ENCODE measurements at regions of chr9 and their contacts with region 1.

Region 1: GRCh38 chr9:125126019-125126746 is 17.1 kb downstream of the SCAI start:
- DNase-seq: peak; percentile 68
- CTCF ChIP-seq: no peak

Region 2: DNA sequence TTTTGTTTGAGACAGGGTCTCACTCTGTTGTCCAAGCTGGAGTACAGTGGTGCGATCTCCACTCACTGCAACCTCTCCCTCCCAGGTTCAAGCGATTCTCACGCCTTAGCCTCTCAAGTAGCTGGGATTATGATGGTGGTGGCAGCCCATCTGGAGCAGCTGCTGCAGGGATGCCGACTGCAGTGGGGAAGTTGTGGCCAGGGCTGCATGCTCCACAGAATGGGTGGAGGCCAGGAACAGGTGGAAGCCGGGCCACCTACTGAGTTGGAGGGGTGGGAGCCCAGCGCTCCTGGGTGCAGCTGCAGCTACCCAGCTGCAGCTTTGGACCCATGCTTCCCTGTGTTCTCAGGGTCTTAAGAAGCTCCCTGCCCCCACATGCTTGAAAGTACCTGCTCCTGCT is 82.6 kb before region 1 on chr9:
- CTCF ChIA-PET with region 1: no interaction called
- POLR2A ChIA-PET with region 1: no interaction called
- DNase-seq: no peak
- CTCF ChIP-seq: no peak

Region 3: DNA sequence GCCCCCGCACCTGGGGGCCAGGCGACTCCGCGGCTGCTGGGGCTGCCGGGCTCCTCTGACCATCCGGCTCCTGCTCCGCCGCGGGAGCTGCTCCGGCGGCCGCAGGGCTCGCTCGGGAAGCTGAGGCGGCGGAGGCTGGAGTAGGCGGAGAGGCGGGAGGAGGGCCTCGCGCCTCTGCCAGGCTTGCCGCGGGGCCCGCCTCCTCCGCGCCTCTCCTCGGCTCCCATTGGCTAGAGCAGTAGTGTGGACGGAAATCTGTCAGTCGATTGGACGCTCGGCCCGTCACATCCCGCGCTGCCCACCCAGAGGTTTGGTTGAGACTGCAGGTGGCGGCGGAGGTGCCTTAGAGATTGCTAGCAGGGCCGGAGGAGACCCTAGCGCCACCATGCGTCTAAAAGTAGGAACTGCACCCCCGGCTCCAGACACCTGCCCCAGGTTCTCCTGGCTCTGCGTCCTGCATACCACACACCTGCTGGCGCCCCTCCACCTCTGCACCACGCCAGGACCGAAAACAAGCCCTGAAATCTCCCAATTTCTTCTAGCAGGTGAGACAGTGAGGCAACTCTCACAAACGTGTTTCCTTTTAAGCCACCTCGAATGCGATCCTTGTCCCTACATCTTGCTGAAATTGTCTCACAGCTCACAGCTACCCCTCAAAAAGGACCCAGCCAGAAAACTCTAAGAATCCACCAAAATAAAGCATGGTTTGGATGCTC is 17.4 kb after region 1 on chr9 and contains the start of gene SCAI:
- CTCF ChIA-PET with region 1: interaction called, 13 read pairs
- POLR2A ChIA-PET with region 1: no interaction called
- DNase-seq: peak; percentile 98
- CTCF ChIP-seq: peak; percentile 85

Region 4: GRCh38 chr9:125172031-125172755 is 46.0 kb after region 1 on chr9:
- CTCF ChIA-PET with region 1: no interaction called
- POLR2A ChIA-PET with region 1: interaction called, 13 read pairs
- DNase-seq: no peak
- CTCF ChIP-seq: no peak